Dendritic cell treated with granulocyte-macrophage colony-stimulating factor and Interleukin-4, amounts not matched to agents 40 ng/mL and 50 ng/mL, for 4 days (primary cell): ENCODE measurements at regions of chr15 and their contacts with region 1.

Region 1: DNA sequence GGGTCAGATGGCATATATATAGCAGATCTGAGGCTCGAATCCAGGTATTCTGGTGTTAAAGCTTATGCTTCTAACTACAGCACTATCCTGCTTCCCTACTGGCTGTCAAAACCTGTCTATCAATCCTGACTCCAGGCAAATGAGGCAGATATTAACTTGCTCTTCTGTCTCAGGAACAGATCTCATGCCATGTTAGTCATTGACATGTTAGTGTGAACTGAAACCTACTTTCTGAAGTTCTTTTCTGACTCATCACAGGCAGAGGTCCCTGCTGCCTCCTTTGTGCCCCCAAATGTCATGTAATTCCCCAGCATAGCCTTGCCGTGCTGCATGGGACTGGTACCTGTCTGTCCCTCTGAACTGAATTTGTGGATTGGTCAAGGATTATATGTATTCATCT is 125.0 kb upstream of the SMAD3 start:
- H3K4me3 Mint-ChIP-seq: no peak overlapping the region
- H3K27ac Mint-ChIP-seq: peak overlapping the region; percentile 80
- H3K4me1 Mint-ChIP-seq: peaks cover 63% of the 10 kb centered on the region
- H3K27me3 Mint-ChIP-seq: peaks cover 15% of the 10 kb centered on the region

Region 2: DNA sequence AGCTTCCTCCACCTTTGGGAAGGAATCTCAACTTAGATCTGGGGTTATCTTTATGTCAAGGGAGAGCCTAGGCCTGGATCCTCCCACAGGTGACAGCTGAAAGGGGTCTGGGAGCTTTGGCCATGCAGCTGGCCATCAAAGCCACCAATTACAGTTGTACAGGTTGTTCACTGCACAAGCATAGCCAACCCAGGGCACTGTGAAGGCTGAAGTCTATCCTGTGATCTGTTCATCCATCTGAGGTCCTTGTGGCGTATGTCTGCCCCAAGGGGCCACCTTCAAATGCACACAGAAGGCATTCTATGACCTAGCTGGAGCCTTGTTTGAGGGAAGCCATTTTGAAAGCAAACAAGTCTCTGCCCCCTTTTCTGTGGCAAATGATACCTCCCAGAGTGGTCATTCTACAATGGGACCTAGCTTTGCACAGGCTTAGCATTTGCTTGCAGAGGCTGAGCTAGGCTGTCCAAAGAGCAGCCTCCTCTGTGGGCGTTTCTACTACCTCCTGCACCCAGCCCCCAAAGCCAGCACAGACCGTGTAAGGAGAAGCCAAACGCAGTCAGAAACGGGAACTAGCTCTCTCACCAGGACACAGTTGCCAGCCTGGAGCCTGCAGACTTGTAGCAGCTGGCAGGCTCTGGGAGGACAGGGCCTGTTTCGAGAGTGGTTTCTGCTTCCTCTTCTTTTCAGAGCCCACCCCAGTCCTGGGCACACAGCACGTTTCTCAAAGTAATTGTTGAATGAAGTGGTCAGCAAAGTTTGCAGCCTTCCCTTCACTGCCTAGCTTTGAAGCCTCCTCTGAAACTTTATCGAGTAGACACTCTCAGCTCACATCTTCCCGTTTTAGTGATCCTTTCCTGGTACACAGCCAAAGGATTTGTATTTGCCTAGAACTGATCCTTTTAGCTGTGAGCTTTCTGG is 32.3 kb before region 1 on chr15:
- intact Hi-C with region 1: loop called (anchors 5 kb)
- H3K4me3 Mint-ChIP-seq: peak overlapping the region; percentile 41
- H3K27ac Mint-ChIP-seq: peak overlapping the region; percentile 86
- H3K4me1 Mint-ChIP-seq: peaks cover 81% of the 10 kb centered on the region
- H3K27me3 Mint-ChIP-seq: no peaks in the 10 kb centered on the region